Astrocyte of the cerebellum (primary cell): ENCODE measurements at regions of chr14 and their contacts with region 1.

Region 1: DNA sequence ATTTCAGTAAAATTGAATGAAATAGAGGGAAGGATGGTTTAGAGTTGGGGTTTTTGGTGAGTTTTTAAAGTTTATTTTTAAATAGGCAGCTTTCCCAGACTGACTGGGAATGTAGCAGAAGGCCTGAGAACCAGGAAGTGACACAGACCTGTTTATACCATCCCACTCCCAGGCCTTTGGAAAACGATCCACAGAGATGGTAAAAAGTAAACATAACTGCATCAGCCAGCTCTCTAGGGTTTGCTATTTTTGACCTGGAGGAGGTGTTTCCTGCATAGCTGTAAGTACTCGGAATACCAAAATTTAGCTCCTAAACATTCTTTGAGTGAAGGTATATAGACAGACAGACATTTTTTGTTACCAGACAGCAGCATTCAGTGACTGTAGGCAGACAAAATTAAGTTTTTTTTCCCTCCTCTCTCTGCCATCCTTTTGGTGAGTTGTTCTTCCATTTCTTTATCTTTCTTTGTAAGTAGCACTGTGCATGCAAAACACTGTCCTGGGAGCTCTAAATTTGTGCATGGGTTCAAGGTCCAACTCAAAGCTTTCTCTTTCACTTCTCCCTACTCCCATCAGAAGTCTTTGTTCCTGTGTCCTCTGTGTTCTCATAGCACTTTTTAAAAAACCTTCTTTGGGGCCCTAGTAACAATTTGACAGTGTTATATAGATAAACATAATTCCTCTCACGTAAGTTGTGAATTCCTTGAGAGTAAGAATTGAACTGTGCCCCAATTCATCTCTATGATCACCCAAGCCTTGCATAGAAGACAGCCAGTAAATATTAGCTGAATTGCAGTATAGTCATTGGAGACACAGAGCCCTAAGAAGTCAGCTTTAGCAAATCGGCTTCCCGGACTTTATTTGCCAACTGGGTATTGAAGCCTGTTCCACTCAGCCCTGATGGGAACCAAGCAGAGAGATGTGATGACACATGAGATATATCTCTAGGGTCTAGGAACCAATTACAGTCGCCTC is 37.4 kb downstream of the SUSD6 start:
- DNase-seq: no peak
- H3K4me3 ChIP-seq: no peak overlapping the region
- CTCF ChIP-seq: no peak

Region 2: DNA sequence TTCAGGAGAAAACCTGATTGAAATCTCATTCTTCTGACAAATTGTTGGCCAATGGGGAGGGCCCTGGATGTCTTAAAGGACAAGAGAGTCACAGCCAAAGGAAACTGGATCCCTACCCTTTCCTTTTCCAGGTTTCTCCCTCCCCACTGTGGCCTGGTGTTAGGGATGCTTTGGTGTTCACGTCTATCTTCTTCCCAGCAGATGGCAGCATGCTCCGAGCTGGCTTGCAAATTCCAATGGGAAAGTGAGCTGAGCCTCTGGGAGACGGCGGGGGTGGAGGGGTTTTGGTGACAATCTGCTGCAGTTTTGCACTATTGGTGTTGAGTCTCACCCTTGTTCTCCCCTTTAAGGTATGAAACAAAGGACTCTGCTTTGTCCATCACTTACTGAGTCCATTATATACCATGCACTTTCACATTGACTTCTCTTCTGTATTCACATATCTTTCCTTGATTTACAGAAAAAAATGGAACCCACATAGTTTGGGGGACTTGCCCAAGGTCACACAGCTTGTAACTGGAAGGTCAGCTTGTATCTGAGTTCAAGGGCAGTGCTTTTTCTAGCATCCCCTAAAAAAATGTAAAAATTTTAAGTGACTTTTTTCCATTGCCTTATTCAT is 113.4 kb before region 1 on chr14:
- in situ Hi-C with region 1: no loop called
- DNase-seq: no peak
- H3K4me3 ChIP-seq: no peak overlapping the region
- CTCF ChIP-seq: peak; percentile 84

Region 3: DNA sequence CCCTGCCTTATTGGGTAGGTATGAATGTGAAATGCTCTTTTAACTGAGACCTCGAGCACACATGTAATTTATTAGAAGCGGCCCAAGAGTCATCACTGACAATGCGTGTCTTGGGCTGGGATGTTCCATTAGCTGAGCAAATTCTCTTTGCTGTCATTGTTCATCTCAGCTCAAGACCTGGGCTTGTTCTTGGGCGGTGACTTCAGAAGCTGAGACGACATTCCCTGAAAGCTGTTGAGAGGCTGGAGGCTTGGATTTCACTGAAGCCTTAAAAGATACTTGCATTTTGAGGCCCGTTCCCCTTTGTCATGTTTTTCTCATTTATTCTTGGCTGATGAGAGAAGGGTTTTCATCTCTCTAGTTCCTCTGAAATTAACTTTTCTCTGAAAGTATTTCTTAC is 54.0 kb before region 1 on chr14:
- in situ Hi-C with region 1: loop called (anchors 5 kb)
- DNase-seq: no peak
- H3K4me3 ChIP-seq: no peak overlapping the region
- CTCF ChIP-seq: no peak